K562 (cell line): ENCODE measurements at regions of chr2 and their contacts with region 1.

Region 1: GRCh38 chr2:119011162-119011909 is 69.3 kb downstream of the MARCO start:
- DNase-seq: peak; percentile 55 to 73 (median 65)
- ATAC-seq: peak; percentile 98
- H3K4me3 ChIP-seq: no peak overlapping the region
- H3K27ac ChIP-seq: no peak overlapping the region
- H3K4me1 ChIP-seq: no peaks in the 10 kb centered on the region
- H3K27me3 ChIP-seq: peaks cover 5 to 49% of the 10 kb centered on the region in 2 experiments; a peak in 4 of 5 replicates
- CTCF ChIP-seq: peak; percentile 58 to 80 (median 67)
- EP300 ChIP-seq: no peak
- POLR2A ChIP-seq: no peak
- RAD21 ChIP-seq: peak; percentile 55 to 70

Region 2: GRCh38 chr2:118842661-118843482 is 168.5 kb before region 1 on chr2:
- CTCF ChIA-PET with region 1: no interaction called
- POLR2A ChIA-PET with region 1: no interaction called
- in situ Hi-C with region 1: no loop called
- intact Hi-C with region 1: no loop called
- DNase-seq: no peak
- ATAC-seq: no peak
- H3K4me3 ChIP-seq: no peak overlapping the region
- H3K27ac ChIP-seq: no peak overlapping the region
- H3K4me1 ChIP-seq: peaks cover 6 to 28% of the 10 kb centered on the region in 2 experiments; a peak in 4 of 5 replicates
- H3K27me3 ChIP-seq: peaks cover 17 to 33% of the 10 kb centered on the region in 2 experiments; a peak in 4 of 5 replicates
- CTCF ChIP-seq: no peak
- EP300 ChIP-seq: no peak
- POLR2A ChIP-seq: no peak
- RAD21 ChIP-seq: no peak

Region 3: GRCh38 chr2:118954297-118955060 is 56.9 kb before region 1 on chr2:
- CTCF ChIA-PET with region 1: no interaction called
- POLR2A ChIA-PET with region 1: no interaction called
- in situ Hi-C with region 1: no loop called
- intact Hi-C with region 1: no loop called
- DNase-seq: no peak
- ATAC-seq: no peak
- H3K4me3 ChIP-seq: no peak overlapping the region
- H3K27ac ChIP-seq: no peak overlapping the region; the same call in 2 of the 3 replicates
- H3K4me1 ChIP-seq: no peaks in the 10 kb centered on the region; a peak in 1 of 5 replicates
- H3K27me3 ChIP-seq: peaks cover 0 to 6% of the 10 kb centered on the region in 2 experiments; a peak in 1 of 5 replicates
- CTCF ChIP-seq: no peak
- EP300 ChIP-seq: no peak
- POLR2A ChIP-seq: no peak
- RAD21 ChIP-seq: no peak

Region 4: DNA sequence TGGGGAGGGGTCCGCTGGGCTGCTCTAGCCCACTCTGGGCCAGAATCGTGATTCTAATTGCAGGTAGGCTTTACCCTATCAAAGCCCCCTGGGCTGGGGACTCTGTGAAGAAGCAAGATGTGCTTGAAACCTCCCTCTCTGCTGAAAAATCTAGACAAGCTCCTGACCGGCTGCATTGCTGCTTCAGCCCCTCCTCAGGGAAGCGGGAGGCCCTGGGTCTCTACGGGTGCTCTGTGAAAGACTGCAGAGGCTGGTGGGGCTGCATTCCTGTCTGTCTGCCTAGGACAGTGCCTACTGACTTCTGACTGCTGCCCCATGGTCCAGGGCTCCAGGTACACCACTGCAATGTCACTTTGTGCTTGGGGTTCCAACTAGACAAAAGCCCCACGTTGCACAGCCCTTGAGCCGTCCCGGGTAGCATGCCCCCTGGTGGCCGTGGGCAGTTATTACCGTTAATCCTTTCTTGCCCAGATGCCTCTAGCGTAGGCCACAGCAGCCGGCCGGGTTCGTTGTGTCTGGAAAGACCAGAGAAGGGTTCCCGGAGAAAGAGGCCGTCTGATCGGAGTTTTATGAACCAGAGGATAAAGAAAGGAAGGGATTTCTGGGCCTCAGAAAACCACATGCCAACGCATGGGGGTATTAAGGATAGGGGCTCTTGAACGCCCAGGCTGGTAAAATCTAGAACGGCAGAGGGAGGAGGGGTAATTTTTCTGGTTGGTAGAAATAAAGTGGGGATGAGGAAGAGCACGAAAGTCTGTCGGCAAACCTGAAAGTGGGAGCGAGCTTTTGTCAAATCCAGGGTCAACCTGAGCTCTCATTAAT is 163.1 kb after region 1 on chr2:
- CTCF ChIA-PET with region 1: no interaction called
- POLR2A ChIA-PET with region 1: no interaction called
- in situ Hi-C with region 1: no loop called
- intact Hi-C with region 1: loop called (anchors 1 kb)
- DNase-seq: peak; percentile 64 to 79 (median 73)
- ATAC-seq: peak; percentile 95
- H3K4me3 ChIP-seq: no peak overlapping the region
- H3K27ac ChIP-seq: no peak overlapping the region
- H3K4me1 ChIP-seq: peaks cover 3 to 17% of the 10 kb centered on the region in 2 experiments; a peak in 3 of 5 replicates
- H3K27me3 ChIP-seq: peaks cover 0 to 23% of the 10 kb centered on the region in 2 experiments; a peak in 2 of 5 replicates
- CTCF ChIP-seq: peak; percentile 81 to 90 (median 86)
- EP300 ChIP-seq: no peak
- POLR2A ChIP-seq: no peak
- RAD21 ChIP-seq: peak; percentile 40 to 61

Region 5: GRCh38 chr2:119264781-119265692 is 253.7 kb after region 1 on chr2:
- CTCF ChIA-PET with region 1: interaction called, 4 read pairs
- POLR2A ChIA-PET with region 1: interaction called, 3 read pairs
- in situ Hi-C with region 1: no loop called
- intact Hi-C with region 1: loop called (anchors 2 kb)
- DNase-seq: peak; percentile 64 to 73 (median 68)
- ATAC-seq: peak; percentile 99
- H3K4me3 ChIP-seq: no peak overlapping the region
- H3K27ac ChIP-seq: no peak overlapping the region
- H3K4me1 ChIP-seq: peaks cover 2 to 7% of the 10 kb centered on the region in 2 experiments; a peak in 3 of 5 replicates
- H3K27me3 ChIP-seq: no peaks in the 10 kb centered on the region
- CTCF ChIP-seq: peak; percentile 76 to 85 (median 79)
- EP300 ChIP-seq: no peak
- POLR2A ChIP-seq: no peak
- RAD21 ChIP-seq: peak; percentile 61 to 75

Region 6: GRCh38 chr2:119290859-119291587 is 279.7 kb after region 1 on chr2:
- CTCF ChIA-PET with region 1: interaction called, 3 read pairs
- POLR2A ChIA-PET with region 1: interaction called, 4 read pairs
- in situ Hi-C with region 1: loop called (anchors 25 kb)
- intact Hi-C with region 1: loop called (anchors 5 kb)
- DNase-seq: peak; percentile 62 to 74 (median 67)
- ATAC-seq: peak; percentile 97
- H3K4me3 ChIP-seq: no peak overlapping the region
- H3K27ac ChIP-seq: no peak overlapping the region
- H3K4me1 ChIP-seq: no peaks in the 10 kb centered on the region; a peak in 1 of 5 replicates
- H3K27me3 ChIP-seq: peaks cover 32 to 58% of the 10 kb centered on the region in 2 experiments
- CTCF ChIP-seq: peak; percentile 79 to 83 (median 82)
- EP300 ChIP-seq: no peak
- POLR2A ChIP-seq: no peak
- RAD21 ChIP-seq: peak; percentile 65 to 89